MCF 10A (cell line): ENCODE measurements at regions of chr22 and their contacts with region 1.

Region 1: DNA sequence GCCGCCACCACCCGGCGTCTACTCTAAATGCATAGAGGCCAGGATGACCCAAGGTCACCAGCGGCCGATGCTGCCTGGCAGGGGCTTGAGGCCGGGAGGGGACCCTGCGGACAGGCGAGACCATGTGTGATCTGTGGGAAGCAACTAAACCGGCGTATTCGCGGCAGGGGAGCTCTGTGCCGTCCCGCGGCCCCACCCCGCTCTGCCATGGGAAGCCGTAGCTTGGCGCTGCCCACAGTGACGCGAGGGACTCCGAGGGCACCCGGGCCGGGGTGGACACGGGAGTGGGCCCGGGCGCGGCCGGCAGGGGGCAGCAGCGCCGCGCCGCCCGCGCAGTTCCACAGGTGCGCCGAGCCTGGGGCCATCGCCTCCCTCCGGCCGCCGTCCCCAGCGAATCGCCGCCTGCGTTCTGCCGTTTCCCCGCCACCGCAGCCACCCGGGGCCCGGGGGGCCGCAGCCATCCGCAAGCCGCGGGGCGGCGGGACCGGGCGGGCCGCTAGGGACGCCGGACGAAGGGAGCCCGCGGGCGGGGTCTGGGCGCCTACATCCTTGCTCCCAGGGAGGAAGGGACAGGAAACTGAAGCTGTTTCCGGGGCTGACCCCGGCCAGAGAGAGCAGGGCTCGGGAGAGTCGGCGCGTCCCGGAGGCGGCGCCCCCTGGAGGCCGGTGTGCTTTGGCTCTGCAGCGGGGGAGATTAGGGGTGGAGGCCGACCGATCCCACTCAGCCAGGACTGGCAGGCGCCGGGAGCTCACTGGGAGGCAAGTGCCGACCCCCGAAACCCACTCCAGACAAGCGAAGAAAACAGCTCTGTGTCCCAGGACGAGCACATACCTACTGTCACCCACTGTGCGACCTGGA is 12.5 kb upstream of the HDHD5 start:
- DNase-seq: peak; percentile 87
- H3K4me3 Mint-ChIP-seq: peak overlapping the region; percentile 91
- H3K27ac Mint-ChIP-seq: peak overlapping the region; percentile 99
- H3K4me1 Mint-ChIP-seq: peaks cover 6% of the 10 kb centered on the region
- H3K27me3 Mint-ChIP-seq: no peaks in the 10 kb centered on the region
- CTCF ChIP-seq: peak; percentile 56

Region 2: DNA sequence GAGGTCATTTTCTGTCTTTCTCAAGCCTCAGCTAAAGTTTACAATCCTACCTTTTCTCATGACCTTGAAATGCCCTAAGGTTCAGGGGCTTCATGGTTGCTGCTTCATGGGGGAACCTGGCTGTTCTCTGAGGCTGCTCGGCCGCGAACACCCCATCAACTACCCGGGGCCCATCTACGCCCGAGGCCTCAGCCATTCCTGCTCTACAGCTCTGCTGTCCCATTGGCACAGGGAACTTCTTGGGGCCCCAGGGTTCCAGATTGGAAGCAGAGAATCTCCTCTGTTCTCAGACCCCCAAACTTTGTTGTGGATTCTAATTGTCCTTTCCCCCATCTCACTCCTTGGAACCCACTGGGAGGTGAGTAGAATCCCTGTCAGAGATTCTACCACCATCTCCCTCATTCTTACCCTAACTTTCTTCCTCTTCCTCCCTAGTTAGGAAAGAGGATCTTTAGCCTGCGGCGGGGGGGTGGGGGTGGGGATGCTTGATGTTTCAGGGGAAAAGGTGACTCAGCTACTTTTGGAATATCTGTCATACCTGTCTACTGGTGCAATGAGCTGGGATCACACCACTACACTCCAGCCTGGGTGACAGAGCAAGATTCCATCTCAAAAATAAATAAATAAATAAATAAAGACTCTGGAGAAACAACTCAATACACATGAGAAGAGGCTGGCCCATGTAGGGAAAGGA is 585.5 kb before region 1 on chr22:
- CTCF ChIA-PET with region 1: no interaction called
- POLR2A ChIA-PET with region 1: no interaction called
- intact Hi-C with region 1: no loop called
- DNase-seq: no peak
- H3K4me3 Mint-ChIP-seq: no peak overlapping the region
- H3K27ac Mint-ChIP-seq: no peak overlapping the region
- H3K4me1 Mint-ChIP-seq: no peaks in the 10 kb centered on the region
- H3K27me3 Mint-ChIP-seq: no peaks in the 10 kb centered on the region
- CTCF ChIP-seq: no peak

Region 3: DNA sequence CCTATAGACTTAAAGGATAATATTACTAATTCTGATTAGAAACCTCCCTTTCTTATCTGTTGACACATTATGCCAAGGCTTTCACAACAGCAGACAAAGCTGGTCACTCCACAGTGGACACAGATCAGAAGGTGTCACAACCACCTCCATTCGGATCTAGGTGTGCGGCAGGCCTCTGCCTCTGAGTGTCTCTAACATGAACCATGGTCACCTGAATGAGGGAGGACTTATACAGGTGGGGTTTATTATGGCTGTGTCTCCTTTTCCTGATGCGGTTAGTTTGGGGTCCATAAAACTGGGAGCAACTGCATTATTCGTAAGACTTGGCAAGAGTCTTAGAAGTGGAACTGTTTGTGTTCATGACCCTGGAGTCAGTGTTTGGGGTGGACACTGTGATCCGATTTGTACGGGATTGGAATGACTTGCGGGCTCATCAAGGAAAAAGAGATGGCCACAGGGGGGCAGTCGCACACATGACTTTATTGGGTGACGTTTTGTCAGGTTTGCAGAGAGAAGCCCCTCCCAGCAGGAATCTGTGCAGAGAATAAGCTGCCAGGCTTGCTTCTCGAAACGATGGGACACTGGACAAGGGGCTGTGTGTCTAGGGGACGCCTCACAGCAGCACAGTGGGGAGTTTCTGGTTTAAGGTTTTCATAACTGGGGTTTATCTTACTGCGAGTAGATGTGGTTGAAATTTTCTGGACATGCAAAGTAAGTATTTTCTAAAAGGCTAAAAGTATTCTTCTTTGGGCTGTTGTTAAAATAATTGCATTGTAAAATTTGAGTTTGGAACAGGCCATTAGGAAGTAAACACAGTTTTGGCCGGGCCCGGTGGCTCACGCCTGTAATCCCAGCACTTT is 254.2 kb before region 1 on chr22:
- CTCF ChIA-PET with region 1: interaction called, 8 read pairs
- POLR2A ChIA-PET with region 1: interaction called, 3 read pairs
- intact Hi-C with region 1: loop called (anchors 5 kb)
- DNase-seq: peak; percentile 75
- H3K4me3 Mint-ChIP-seq: no peak overlapping the region
- H3K27ac Mint-ChIP-seq: no peak overlapping the region
- H3K4me1 Mint-ChIP-seq: peaks cover 7% of the 10 kb centered on the region
- H3K27me3 Mint-ChIP-seq: peaks cover 15% of the 10 kb centered on the region
- CTCF ChIP-seq: peak; percentile 60

Region 4: GRCh38 chr22:17149076-17149810 is 22.3 kb before region 1 on chr22:
- CTCF ChIA-PET with region 1: interaction called, 18 read pairs
- POLR2A ChIA-PET with region 1: no interaction called
- intact Hi-C with region 1: no loop called
- DNase-seq: no peak
- H3K4me3 Mint-ChIP-seq: no peak overlapping the region
- H3K27ac Mint-ChIP-seq: no peak overlapping the region
- H3K4me1 Mint-ChIP-seq: peaks cover 13% of the 10 kb centered on the region
- H3K27me3 Mint-ChIP-seq: no peaks in the 10 kb centered on the region
- CTCF ChIP-seq: no peak

Region 5: GRCh38 chr22:17205432-17205831 is 33.9 kb after region 1 on chr22:
- CTCF ChIA-PET with region 1: interaction called, 16 read pairs
- POLR2A ChIA-PET with region 1: no interaction called
- intact Hi-C with region 1: no loop called
- DNase-seq: no peak
- H3K4me3 Mint-ChIP-seq: no peak overlapping the region
- H3K27ac Mint-ChIP-seq: no peak overlapping the region
- H3K4me1 Mint-ChIP-seq: no peaks in the 10 kb centered on the region
- H3K27me3 Mint-ChIP-seq: peaks cover 13% of the 10 kb centered on the region
- CTCF ChIP-seq: no peak

Region 6: GRCh38 chr22:17471886-17472535 is 300.5 kb after region 1 on chr22:
- CTCF ChIA-PET with region 1: interaction called, 15 read pairs
- POLR2A ChIA-PET with region 1: no interaction called
- intact Hi-C with region 1: no loop called
- DNase-seq: no peak
- H3K4me3 Mint-ChIP-seq: no peak overlapping the region
- H3K27ac Mint-ChIP-seq: no peak overlapping the region
- H3K4me1 Mint-ChIP-seq: no peaks in the 10 kb centered on the region
- H3K27me3 Mint-ChIP-seq: peaks cover 42% of the 10 kb centered on the region
- CTCF ChIP-seq: no peak

Region 7: DNA sequence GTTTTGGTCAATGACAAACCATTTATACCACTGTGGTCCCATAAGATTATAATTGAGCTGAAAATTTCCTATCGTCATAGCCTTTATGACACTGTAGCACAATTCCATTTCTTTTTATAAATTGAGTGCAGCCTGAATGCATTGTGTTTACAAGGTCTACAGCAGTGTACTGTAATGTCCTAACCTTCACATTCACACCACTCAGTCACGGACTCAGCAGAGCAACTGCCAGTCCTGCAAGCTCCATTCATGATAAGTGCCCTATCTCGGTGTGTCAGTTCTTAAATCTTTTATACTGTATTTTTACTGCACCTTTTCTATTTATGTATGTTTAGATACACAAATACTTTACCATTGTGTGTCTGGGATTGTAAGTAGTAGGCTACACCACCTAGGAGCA is 336.6 kb after region 1 on chr22:
- CTCF ChIA-PET with region 1: interaction called, 189 read pairs
- POLR2A ChIA-PET with region 1: interaction called, 4 read pairs
- intact Hi-C with region 1: no loop called
- DNase-seq: no peak
- H3K4me3 Mint-ChIP-seq: no peak overlapping the region
- H3K27ac Mint-ChIP-seq: no peak overlapping the region
- H3K4me1 Mint-ChIP-seq: peaks cover 3% of the 10 kb centered on the region
- H3K27me3 Mint-ChIP-seq: peaks cover 54% of the 10 kb centered on the region
- CTCF ChIP-seq: no peak